Activated CD4-positive, alpha-beta memory T cell treated with anti-CD3 and anti-CD28 coated beads for 36 hours (primary cell): ENCODE measurements at regions of chr2 and their contacts with region 1.

Region 1: DNA sequence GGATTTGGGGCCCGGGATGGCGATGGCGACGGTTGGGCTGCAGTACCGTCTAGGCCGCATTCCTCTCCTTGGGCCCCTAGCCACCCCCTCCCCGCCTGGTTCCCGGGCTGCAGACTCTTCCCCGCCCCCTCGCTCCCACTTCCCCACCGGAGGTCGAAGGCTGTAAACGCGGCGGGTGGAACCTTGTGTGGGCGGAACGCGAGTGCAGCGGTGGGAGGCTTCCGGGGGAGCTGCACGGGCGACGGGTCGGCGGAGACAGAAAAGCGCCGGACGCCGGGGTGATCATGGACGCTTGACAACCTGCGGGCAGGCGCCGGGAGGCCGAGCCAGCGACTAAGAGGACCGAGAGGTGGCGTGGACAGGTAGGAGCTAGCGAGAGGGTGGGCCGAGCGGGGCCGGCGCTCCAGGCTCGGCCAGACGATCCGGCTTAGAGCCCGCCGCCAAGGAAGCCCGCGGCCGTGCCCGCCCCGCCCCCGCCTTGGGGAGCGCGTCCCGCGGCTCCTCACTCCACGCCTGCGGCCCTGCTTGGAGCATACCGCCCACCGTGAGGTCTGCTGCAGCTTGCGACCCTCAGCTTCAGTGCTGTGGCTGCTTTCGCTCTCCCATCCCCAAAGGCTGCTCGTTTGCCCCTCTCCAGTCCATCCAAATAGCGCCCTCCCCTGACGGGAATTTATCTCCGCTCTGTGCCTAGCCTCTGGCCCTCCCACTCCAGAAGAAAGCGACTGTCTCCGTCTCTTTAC is at the start of gene COPS7B:
- DNase-seq: peak; percentile 91
- H3K4me3 Mint-ChIP-seq: peak within 1 kb of the TSS; percentile 79
- H3K27ac Mint-ChIP-seq: peak within 1 kb of the TSS; percentile 88
- H3K4me1 Mint-ChIP-seq: peaks cover 67% of the 10 kb centered on the region
- H3K27me3 Mint-ChIP-seq: no peaks in the 10 kb centered on the region
- total RNA-seq, gene COPS7B: 47.1 to 50.6 TPM

Region 2: GRCh38 chr2:231800493-231801091 is 14.2 kb after region 1 on chr2:
- CTCF ChIA-PET with region 1: interaction called, 13 read pairs
- POLR2A ChIA-PET with region 1: no interaction called
- intact Hi-C with region 1: no loop called
- DNase-seq: peak; percentile 61
- H3K4me3 Mint-ChIP-seq: no peak overlapping the region
- H3K27ac Mint-ChIP-seq: no peak overlapping the region
- H3K4me1 Mint-ChIP-seq: peaks cover 5% of the 10 kb centered on the region
- H3K27me3 Mint-ChIP-seq: no peaks in the 10 kb centered on the region